ENCODE measurements at regions of chr10 and their contacts with region 1.

Region 1: DNA sequence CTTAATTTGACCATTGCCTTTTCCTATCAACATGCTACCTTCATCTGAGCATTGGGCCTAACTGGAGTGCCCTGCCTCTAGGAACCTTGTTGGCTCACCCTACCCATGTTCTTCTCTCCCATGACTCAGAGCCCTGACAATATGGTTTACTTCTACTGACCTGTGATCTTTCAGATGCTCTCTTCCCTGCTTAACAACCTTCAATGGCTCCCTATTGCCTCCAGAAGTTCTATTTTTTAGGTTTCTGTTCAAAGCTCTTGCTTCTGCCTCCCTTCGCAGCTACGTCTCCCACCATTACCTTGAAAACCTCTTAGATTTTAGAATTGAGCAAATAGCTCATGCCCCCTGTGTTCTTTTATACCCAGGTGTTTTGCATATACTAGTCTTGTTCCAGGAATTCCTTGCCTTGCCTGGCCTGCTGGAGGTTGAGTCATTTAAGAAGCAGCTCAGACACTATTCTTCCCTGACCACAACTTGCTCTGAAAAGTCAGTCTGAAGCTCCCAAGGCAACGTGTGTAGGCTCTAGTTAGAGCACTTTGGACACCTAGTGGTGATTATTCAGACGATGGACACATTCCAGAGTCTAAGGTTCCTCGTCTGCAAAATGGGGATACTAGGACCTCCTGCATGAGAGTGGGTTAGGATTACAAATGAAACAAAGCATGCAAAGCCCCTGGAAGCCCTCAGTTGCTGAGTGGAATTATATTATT is 64.4 kb upstream of the EMX2 start:
- DNase-seq: peak in 1 of 2 experiments; percentile 29
- H3K4me3 ChIP-seq: no peak overlapping the region
- H3K4me3 Mint-ChIP-seq: no peak overlapping the region
- H3K27ac Mint-ChIP-seq: no peak overlapping the region
- H3K4me1 ChIP-seq: no peaks in the 10 kb centered on the region
- H3K4me1 Mint-ChIP-seq: peaks cover under 1% of the 10 kb centered on the region
- H3K27me3 ChIP-seq: no peaks in the 10 kb centered on the region
- H3K27me3 Mint-ChIP-seq: no peaks in the 10 kb centered on the region
- CTCF ChIP-seq: peak in 1 of 2 experiments; percentile 43

Region 2: GRCh38 chr10:116985611-116986010 is 492.5 kb before region 1 on chr10:
- CTCF ChIA-PET with region 1: no interaction called
- POLR2A ChIA-PET with region 1: no interaction called
- intact Hi-C with region 1: no loop called
- DNase-seq: no peak
- H3K4me3 ChIP-seq: no peak overlapping the region
- H3K4me3 Mint-ChIP-seq: peak overlapping the region; percentile 39
- H3K27ac Mint-ChIP-seq: peak overlapping the region; percentile 63
- H3K4me1 ChIP-seq: peaks cover 67% of the 10 kb centered on the region
- H3K4me1 Mint-ChIP-seq: peaks cover 57% of the 10 kb centered on the region
- H3K27me3 ChIP-seq: no peaks in the 10 kb centered on the region
- H3K27me3 Mint-ChIP-seq: no peaks in the 10 kb centered on the region
- CTCF ChIP-seq: no peak

Region 3: DNA sequence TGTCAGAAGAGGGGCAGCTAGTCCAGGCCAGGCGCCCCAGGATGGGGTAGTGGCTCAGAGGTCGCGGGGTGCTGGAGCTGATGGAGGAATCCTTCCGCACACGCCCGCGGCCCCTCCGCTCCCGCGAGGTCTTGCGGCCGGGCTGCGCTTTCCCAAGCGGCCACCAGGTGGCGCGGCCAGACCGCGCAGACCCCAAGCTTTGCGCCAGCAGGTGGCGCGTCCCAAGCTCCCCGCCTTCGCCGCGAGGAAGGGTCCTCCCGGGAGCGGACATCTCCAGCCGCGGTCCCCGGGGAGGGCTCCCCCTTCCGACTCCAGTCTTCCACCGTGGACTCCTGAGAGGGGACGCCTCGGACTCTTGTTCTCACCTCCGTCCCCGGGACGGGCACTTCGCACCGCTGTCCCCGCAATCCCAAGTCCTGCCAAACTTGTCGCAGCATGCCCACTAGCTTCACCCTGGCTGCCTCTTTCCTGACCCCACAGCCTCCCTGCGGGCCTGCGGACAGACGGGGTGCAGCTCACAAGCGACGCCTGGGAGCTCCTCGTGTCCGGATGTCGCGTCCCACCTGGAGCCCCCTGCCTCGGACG is 261.4 kb before region 1 on chr10:
- CTCF ChIA-PET with region 1: interaction called, 5 read pairs
- POLR2A ChIA-PET with region 1: no interaction called
- intact Hi-C with region 1: loop called (anchors 2 kb)
- DNase-seq: peak; percentile 77 to 90
- H3K4me3 ChIP-seq: peak overlapping the region; percentile 59
- H3K4me3 Mint-ChIP-seq: peak overlapping the region; percentile 90
- H3K27ac Mint-ChIP-seq: no peak overlapping the region
- H3K4me1 ChIP-seq: 0 out of 2 replicates have a peak, but pooled peaks cover 5% of the 10 kb centered on the region
- H3K4me1 Mint-ChIP-seq: no peaks in the 10 kb centered on the region
- H3K27me3 ChIP-seq: no peaks in the 10 kb centered on the region; the same call in 1 of the 2 replicates
- H3K27me3 Mint-ChIP-seq: peaks cover 13% of the 10 kb centered on the region
- CTCF ChIP-seq: peak; percentile 100

Region 4: GRCh38 chr10:117431160-117431559 is 47.0 kb before region 1 on chr10:
- CTCF ChIA-PET with region 1: interaction called, 29 read pairs
- POLR2A ChIA-PET with region 1: interaction called, 3 read pairs
- intact Hi-C with region 1: loop called (anchors 1 kb)
- DNase-seq: peak in 1 of 2 experiments; percentile 40
- H3K4me3 ChIP-seq: no peak overlapping the region
- H3K4me3 Mint-ChIP-seq: no peak overlapping the region
- H3K27ac Mint-ChIP-seq: no peak overlapping the region
- H3K4me1 ChIP-seq: peaks cover 23% of the 10 kb centered on the region
- H3K4me1 Mint-ChIP-seq: peaks cover 5% of the 10 kb centered on the region
- H3K27me3 ChIP-seq: no peaks in the 10 kb centered on the region
- H3K27me3 Mint-ChIP-seq: no peaks in the 10 kb centered on the region
- CTCF ChIP-seq: peak; percentile 49 to 58

Region 5: GRCh38 chr10:117442944-117443685 is 35.0 kb before region 1 on chr10:
- CTCF ChIA-PET with region 1: interaction called, 4 read pairs
- POLR2A ChIA-PET with region 1: no interaction called
- intact Hi-C with region 1: loop called (anchors 2 kb)
- DNase-seq: peak in 1 of 2 experiments; percentile 57
- H3K4me3 ChIP-seq: no peak overlapping the region
- H3K4me3 Mint-ChIP-seq: no peak overlapping the region
- H3K27ac Mint-ChIP-seq: no peak overlapping the region
- H3K4me1 ChIP-seq: no peaks in the 10 kb centered on the region
- H3K4me1 Mint-ChIP-seq: no peaks in the 10 kb centered on the region
- H3K27me3 ChIP-seq: no peaks in the 10 kb centered on the region
- H3K27me3 Mint-ChIP-seq: no peaks in the 10 kb centered on the region
- CTCF ChIP-seq: peak; percentile 47 to 86

Region 6: GRCh38 chr10:118332236-118332635 is 854.1 kb after region 1 on chr10:
- CTCF ChIA-PET with region 1: no interaction called
- POLR2A ChIA-PET with region 1: no interaction called
- intact Hi-C with region 1: no loop called
- DNase-seq: no peak
- H3K4me3 ChIP-seq: no peak overlapping the region
- H3K4me3 Mint-ChIP-seq: no peak overlapping the region
- H3K27ac Mint-ChIP-seq: no peak overlapping the region
- H3K4me1 ChIP-seq: no peaks in the 10 kb centered on the region
- H3K4me1 Mint-ChIP-seq: no peaks in the 10 kb centered on the region
- H3K27me3 ChIP-seq: no peaks in the 10 kb centered on the region
- H3K27me3 Mint-ChIP-seq: no peaks in the 10 kb centered on the region
- CTCF ChIP-seq: no peak

Measured in Caco-2 (cell line).